Esophagus muscularis mucosa (tissue), 4 donors: ENCODE measurements at regions of chr18 and their contacts with region 1.

Region 1: DNA sequence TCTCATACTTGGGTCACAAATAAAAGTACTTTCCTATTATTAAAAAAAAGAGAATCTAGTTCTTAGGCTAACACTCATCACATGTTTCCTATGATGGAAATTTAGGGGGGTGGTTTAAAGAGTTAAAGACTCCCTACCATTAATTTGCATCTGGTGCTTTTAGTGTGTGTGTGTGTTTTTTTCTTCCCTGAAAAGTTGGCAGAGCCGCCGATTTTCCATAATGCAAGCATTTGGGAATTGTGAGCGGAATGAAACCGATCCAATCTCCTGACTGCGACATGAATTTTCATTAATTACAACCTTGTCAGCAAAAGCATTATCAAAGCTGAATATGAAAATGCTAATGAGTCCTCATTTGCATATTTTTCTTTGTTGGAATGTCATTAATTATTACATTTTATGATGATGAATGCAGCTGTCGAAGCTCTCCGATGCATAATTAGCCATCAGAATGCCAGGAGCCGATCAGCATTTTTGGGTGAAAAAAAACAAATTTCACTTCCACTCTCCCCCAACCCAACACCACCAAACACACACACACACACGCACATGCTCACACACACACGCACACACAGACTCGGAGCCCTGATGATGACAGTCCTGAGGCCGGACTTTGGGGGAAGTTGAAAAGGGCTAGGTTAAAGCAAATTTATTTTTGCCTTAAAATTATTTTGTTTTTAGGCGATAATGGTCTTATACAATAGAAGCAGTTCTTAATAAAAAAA is 165.4 kb downstream of the TCF4 start:
- DNase-seq: no peak
- H3K4me3 ChIP-seq: peak overlapping the region; percentile 39 to 53 (median 42)
- H3K27ac ChIP-seq: peak overlapping the region; percentile 40 to 67 (median 59)
- H3K4me1 ChIP-seq: peaks cover 0 to 13% (median 7%) of the 10 kb centered on the region in 4 donors
- H3K27me3 ChIP-seq: no peaks in the 10 kb centered on the region
- CTCF ChIP-seq: no peak
- EP300 ChIP-seq: no peak
- POLR2A ChIP-seq: no peak

Region 2: DNA sequence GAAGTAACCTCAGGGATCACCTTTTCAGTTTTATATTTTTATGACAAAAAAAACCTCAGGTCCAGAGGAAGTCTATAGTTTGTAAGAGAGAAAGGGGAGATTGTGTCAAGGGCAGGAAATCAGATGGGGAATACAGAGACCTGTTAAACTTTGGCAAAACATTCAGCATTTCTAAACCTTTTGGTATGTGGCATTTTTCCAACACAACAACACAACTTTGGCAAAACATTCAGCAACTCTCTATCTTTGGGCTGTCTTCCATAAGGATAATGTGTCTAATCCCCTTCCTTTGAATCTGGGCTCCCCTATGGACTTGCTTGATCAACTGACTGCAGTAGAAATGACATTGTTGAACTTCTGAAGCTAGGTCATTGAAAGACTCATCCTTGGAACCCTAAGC is 242.8 kb before region 1 on chr18:
- intact Hi-C with region 1: no loop called
- DNase-seq: peak; percentile 39
- H3K4me3 ChIP-seq: no peak overlapping the region
- H3K27ac ChIP-seq: no peak overlapping the region
- H3K4me1 ChIP-seq: no peaks in the 10 kb centered on the region
- H3K27me3 ChIP-seq: no peaks in the 10 kb centered on the region
- CTCF ChIP-seq: no peak
- EP300 ChIP-seq: no peak
- POLR2A ChIP-seq: no peak

Region 3: DNA sequence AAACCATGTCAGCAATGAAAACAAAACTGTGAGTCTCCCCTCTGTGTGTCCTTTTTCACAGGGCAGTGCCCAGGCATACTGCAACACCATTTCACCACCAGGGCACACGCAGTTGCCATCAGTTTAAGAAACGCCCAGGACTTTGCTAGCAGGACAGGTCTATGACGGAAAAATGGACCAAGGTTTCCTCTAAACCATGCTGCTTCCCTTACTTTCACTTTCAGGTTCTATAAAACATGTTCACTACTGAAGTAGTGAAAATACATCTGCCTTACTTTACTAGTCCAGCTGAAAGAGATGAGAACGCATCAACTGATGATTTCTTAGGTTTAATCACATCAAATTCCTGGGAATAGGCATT is 54.9 kb after region 1 on chr18:
- intact Hi-C with region 1: loop called (anchors 5 kb)
- DNase-seq: no peak
- H3K4me3 ChIP-seq: peak overlapping the region; percentile 45 to 65 (median 58)
- H3K27ac ChIP-seq: peak overlapping the region; percentile 75 to 80 (median 78)
- H3K4me1 ChIP-seq: peaks cover 0 to 19% (median 13%) of the 10 kb centered on the region in 4 donors
- H3K27me3 ChIP-seq: no peaks in the 10 kb centered on the region
- CTCF ChIP-seq: peak in 1 of 3 experiments; percentile 46
- EP300 ChIP-seq: no peak
- POLR2A ChIP-seq: no peak